ENCODE measurements at regions of chr12 and their contacts with region 1.

Region 1: DNA sequence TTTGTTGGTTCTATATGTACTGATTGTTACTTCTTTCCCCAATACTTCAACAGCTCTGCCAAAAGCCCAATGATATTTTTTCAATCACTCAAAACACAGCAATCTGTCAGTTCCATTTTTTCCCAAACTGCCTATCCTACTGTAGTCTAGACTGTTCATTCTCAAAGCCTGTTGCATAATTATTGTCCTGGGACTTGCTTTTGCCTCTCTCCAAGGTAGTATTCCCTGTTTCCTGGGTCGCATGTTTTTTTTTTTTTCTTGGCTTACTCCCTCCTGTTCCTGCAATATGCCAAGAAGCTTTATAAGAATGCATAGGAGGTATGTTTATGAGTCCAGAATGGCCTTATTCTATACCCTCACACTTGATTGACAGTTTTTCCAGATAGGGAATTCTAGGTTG is 19.9 kb upstream of the CCNT1 start:
- DNase-seq: no peak
- ATAC-seq: no peak
- H3K4me3 ChIP-seq: no peak overlapping the region
- H3K27ac ChIP-seq: no peak overlapping the region
- H3K4me1 ChIP-seq: no peaks in the 10 kb centered on the region
- H3K27me3 ChIP-seq: no peaks in the 10 kb centered on the region
- CTCF ChIP-seq: no peak
- EP300 ChIP-seq: no peak
- POLR2A ChIP-seq: no peak
- RAD21 ChIP-seq: no peak

Region 2: GRCh38 chr12:48716493-48717251 is 19.8 kb before region 1 on chr12 and contains the start of gene CCNT1:
- CTCF ChIA-PET with region 1: no interaction called
- POLR2A ChIA-PET with region 1: no interaction called
- RAD21 ChIA-PET with region 1: no interaction called
- SMC1A ChIA-PET with region 1: no interaction called
- in situ Hi-C with region 1: no loop called
- intact Hi-C with region 1: no loop called
- DNase-seq: peak; percentile 100
- ATAC-seq: peak; percentile 95
- H3K4me3 ChIP-seq: peak within 1 kb of the TSS; percentile 94
- H3K27ac ChIP-seq: peak within 1 kb of the TSS; percentile 96
- H3K4me1 ChIP-seq: peaks cover 10% of the 10 kb centered on the region; the same call in 1 of the 2 replicates
- H3K27me3 ChIP-seq: no peaks in the 10 kb centered on the region
- CTCF ChIP-seq: 0 out of 6 replicates have a peak, but pooled peaks of 1 of the 3 experiments have one; percentile 22
- EP300 ChIP-seq: peak in 1 of 2 experiments; percentile 46; a peak in 2 of 4 replicates
- POLR2A ChIP-seq: peak; percentile 87
- RAD21 ChIP-seq: no peak
- polyA plus RNA-seq, gene CCNT1: 6.3 to 6.5 TPM

Region 3: GRCh38 chr12:48758221-48758620 is 21.8 kb after region 1 on chr12:
- CTCF ChIA-PET with region 1: interaction called, 19 read pairs
- POLR2A ChIA-PET with region 1: interaction called, 3 read pairs
- RAD21 ChIA-PET with region 1: interaction called, 6 read pairs
- SMC1A ChIA-PET with region 1: interaction called, 3 read pairs
- in situ Hi-C with region 1: no loop called
- intact Hi-C with region 1: no loop called
- DNase-seq: no peak
- ATAC-seq: no peak
- H3K4me3 ChIP-seq: no peak overlapping the region
- H3K27ac ChIP-seq: no peak overlapping the region
- H3K4me1 ChIP-seq: no peaks in the 10 kb centered on the region
- H3K27me3 ChIP-seq: no peaks in the 10 kb centered on the region
- CTCF ChIP-seq: no peak
- EP300 ChIP-seq: no peak
- POLR2A ChIP-seq: no peak
- RAD21 ChIP-seq: no peak

Region 4: GRCh38 chr12:48777501-48778400 is 41.3 kb after region 1 on chr12:
- CTCF ChIA-PET with region 1: no interaction called
- POLR2A ChIA-PET with region 1: no interaction called
- RAD21 ChIA-PET with region 1: no interaction called
- SMC1A ChIA-PET with region 1: no interaction called
- in situ Hi-C with region 1: no loop called
- intact Hi-C with region 1: no loop called
- DNase-seq: no peak
- ATAC-seq: no peak
- H3K4me3 ChIP-seq: no peak overlapping the region
- H3K27ac ChIP-seq: no peak overlapping the region
- H3K4me1 ChIP-seq: peaks cover 4% of the 10 kb centered on the region
- H3K27me3 ChIP-seq: no peaks in the 10 kb centered on the region
- CTCF ChIP-seq: no peak
- EP300 ChIP-seq: no peak
- POLR2A ChIP-seq: no peak
- RAD21 ChIP-seq: no peak

Measured in GM12878 (cell line).